Esophagus muscularis mucosa (tissue), 4 donors: ENCODE measurements at regions of chr15 and their contacts with region 1.

Region 1: GRCh38 chr15:66841953-66842681 is 140.1 kb downstream of the SMAD6 start:
- DNase-seq: peak; percentile 95
- H3K4me3 ChIP-seq: peak overlapping the region; percentile 57 to 76 (median 60)
- H3K27ac ChIP-seq: peak overlapping the region; percentile 91 to 96 (median 94)
- H3K4me1 ChIP-seq: peaks cover 27 to 54% (median 33%) of the 10 kb centered on the region in 4 donors
- H3K27me3 ChIP-seq: no peaks in the 10 kb centered on the region
- CTCF ChIP-seq: no peak
- EP300 ChIP-seq: no peak
- POLR2A ChIP-seq: no peak

Region 2: GRCh38 chr15:66803182-66803729 is 38.9 kb before region 1 on chr15:
- intact Hi-C with region 1: loop called (anchors 5 kb)
- DNase-seq: peak; percentile 94
- H3K4me3 ChIP-seq: peak overlapping the region in 2 of 4 donors; percentile 12 to 16
- H3K27ac ChIP-seq: peak overlapping the region; percentile 70 to 81 (median 75)
- H3K4me1 ChIP-seq: peaks cover 27 to 46% (median 32%) of the 10 kb centered on the region in 4 donors
- H3K27me3 ChIP-seq: no peaks in the 10 kb centered on the region
- CTCF ChIP-seq: no peak
- EP300 ChIP-seq: no peak
- POLR2A ChIP-seq: no peak